SK-N-SH (cell line): ENCODE measurements at regions of chr1 and their contacts with region 1.

Region 1: DNA sequence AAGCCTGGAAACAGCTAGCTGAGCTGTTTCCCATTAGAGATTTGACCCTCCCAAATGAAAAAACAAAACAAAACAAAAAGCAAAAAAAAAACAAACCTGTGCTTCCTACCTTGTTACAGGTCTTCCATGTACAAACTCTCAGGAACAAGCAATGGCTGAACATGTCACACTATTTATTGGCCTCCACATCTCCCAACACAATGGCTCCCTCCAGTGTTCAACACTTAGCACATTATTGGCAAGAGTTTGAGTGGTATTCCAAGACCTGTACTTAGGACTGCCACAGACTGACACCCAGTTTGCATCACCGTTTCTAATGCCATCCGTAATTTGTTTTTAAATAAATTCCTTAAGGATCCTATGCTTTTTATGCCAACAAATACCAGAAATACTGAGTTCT is 195.0 kb upstream of the OLFM3 start:
- DNase-seq: peak; percentile 35
- H3K4me3 ChIP-seq: no peak overlapping the region; a peak in 1 of 4 replicates
- H3K27ac ChIP-seq: no peak overlapping the region
- H3K4me1 ChIP-seq: peaks cover 0 to 7% of the 10 kb centered on the region in 2 experiments; a peak in 1 of 4 replicates
- H3K27me3 ChIP-seq: no peaks in the 10 kb centered on the region
- CTCF ChIP-seq: peak; percentile 55
- EP300 ChIP-seq: no peak
- RAD21 ChIP-seq: peak; percentile 97

Region 2: DNA sequence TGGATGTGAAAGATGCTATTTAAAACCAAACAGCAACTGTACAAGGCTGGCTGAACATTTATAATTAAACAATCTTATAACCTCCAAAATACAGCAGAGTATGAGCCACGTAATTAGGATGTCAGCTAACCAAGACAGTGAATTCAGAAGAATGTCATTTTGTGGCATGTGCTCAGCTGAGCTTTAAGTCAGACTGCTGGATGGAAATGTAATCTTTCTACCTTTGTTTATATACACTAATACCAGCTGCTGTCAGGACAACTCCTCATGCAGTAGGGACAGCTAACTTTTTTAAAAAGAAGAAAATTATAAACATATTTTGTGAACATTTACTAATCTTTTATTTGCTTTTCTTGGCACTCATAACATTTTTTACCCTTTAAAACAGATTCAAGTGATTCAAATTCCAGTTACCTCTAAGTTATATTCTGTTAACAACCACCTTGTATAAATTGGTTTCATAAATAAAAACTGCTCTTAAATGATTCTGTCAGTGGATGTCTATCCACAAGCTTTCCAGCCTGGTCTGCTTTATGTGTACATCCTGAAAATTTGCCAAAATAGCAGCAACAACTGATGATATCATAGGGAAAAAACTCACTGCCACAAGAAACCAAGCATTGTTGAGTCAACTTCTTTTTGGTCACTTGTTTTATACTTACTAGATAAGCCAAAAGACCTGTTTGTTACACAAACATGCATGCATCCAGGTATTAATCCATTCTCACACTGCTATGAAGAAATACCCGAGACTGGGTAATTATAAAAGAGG is 1202.2 kb before region 1 on chr1:
- CTCF ChIA-PET with region 1: no interaction called
- POLR2A ChIA-PET with region 1: no interaction called
- DNase-seq: no peak
- H3K4me3 ChIP-seq: no peak overlapping the region
- H3K27ac ChIP-seq: peak overlapping the region; percentile 57 to 64; a peak in 3 of 4 replicates
- H3K4me1 ChIP-seq: peaks cover 0 to 10% of the 10 kb centered on the region in 2 experiments; a peak in 3 of 4 replicates
- H3K27me3 ChIP-seq: no peaks in the 10 kb centered on the region
- CTCF ChIP-seq: no peak
- EP300 ChIP-seq: peak; percentile 16 to 55; a peak in 1 of 4 replicates
- RAD21 ChIP-seq: no peak

Region 3: GRCh38 chr1:101474039-101474665 is 717.6 kb before region 1 on chr1:
- CTCF ChIA-PET with region 1: interaction called, 10 read pairs
- POLR2A ChIA-PET with region 1: no interaction called
- DNase-seq: peak; percentile 8
- H3K4me3 ChIP-seq: no peak overlapping the region
- H3K27ac ChIP-seq: no peak overlapping the region
- H3K4me1 ChIP-seq: no peaks in the 10 kb centered on the region
- H3K27me3 ChIP-seq: no peaks in the 10 kb centered on the region
- CTCF ChIP-seq: peak; percentile 57
- EP300 ChIP-seq: no peak
- RAD21 ChIP-seq: peak; percentile 70

Region 4: DNA sequence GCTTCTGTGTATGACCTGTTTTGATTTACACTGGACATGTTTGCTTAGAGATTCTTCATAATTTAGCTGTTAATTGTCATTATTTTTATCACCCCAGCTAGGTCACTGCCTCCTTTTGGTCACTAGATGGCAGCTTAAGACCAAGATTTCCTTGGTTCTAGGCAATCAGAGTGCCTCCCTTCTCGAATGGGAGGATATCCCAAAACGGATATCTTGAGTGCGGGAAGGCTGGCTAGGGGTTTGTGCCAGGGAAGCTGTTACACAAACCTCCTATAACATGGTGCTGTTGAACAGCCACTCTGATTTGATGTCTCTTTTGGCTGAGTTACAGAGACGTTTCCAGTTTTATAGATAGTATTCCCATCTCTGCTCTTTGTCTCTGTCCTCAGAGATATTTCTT is 671.4 kb before region 1 on chr1:
- CTCF ChIA-PET with region 1: interaction called, 28 read pairs
- POLR2A ChIA-PET with region 1: no interaction called
- DNase-seq: peak; percentile 42
- H3K4me3 ChIP-seq: peak overlapping the region in 1 of 2 experiments; percentile 38; a peak in 1 of 4 replicates
- H3K27ac ChIP-seq: no peak overlapping the region
- H3K4me1 ChIP-seq: no peaks in the 10 kb centered on the region
- H3K27me3 ChIP-seq: no peaks in the 10 kb centered on the region
- CTCF ChIP-seq: peak; percentile 86
- EP300 ChIP-seq: no peak
- RAD21 ChIP-seq: peak; percentile 84

Region 5: DNA sequence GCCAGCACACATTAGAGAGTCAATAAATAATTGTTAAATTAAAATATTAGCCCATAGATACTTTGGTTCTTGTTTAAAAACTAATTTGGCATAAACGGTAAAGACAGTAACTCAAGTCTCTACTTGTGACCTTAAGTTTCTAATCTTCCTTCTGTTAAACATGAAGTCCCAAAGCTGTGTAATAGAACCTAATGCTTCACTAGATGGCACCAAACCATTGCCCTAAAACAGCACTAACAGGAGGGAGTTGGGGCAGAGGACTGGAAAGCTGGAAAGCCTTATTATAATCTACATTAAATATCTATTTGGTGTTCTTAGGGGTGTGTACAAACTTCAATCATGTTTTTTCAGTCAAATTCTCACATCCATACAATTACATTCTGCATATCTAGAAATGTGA is 371.7 kb before region 1 on chr1:
- CTCF ChIA-PET with region 1: interaction called, 14 read pairs
- POLR2A ChIA-PET with region 1: no interaction called
- DNase-seq: peak; percentile 15
- H3K4me3 ChIP-seq: no peak overlapping the region
- H3K27ac ChIP-seq: no peak overlapping the region
- H3K4me1 ChIP-seq: no peaks in the 10 kb centered on the region; a peak in 2 of 4 replicates
- H3K27me3 ChIP-seq: no peaks in the 10 kb centered on the region
- CTCF ChIP-seq: peak; percentile 59
- EP300 ChIP-seq: no peak
- RAD21 ChIP-seq: peak; percentile 90

Region 6: GRCh38 chr1:101996825-101997465 is 194.8 kb before region 1 on chr1 and contains the start of gene OLFM3:
- CTCF ChIA-PET with region 1: interaction called, 29 read pairs
- POLR2A ChIA-PET with region 1: no interaction called
- DNase-seq: peak; percentile 73
- H3K4me3 ChIP-seq: peak within 1 kb of the TSS in 1 of 2 experiments; percentile 47; a peak in 2 of 4 replicates
- H3K27ac ChIP-seq: peak within 1 kb of the TSS in 1 of 2 experiments; percentile 39; a peak in 1 of 4 replicates
- H3K4me1 ChIP-seq: no peaks in the 10 kb centered on the region; a peak in 2 of 4 replicates
- H3K27me3 ChIP-seq: peaks cover 7% of the 10 kb centered on the region; the same call in 1 of the 2 replicates
- CTCF ChIP-seq: no peak
- EP300 ChIP-seq: no peak
- RAD21 ChIP-seq: peak; percentile 19; the same call in 1 of the 2 replicates
- polyA plus RNA-seq, gene OLFM3: 0.03 TPM in 1 of 2 replicates, not detected in the other

Region 7: DNA sequence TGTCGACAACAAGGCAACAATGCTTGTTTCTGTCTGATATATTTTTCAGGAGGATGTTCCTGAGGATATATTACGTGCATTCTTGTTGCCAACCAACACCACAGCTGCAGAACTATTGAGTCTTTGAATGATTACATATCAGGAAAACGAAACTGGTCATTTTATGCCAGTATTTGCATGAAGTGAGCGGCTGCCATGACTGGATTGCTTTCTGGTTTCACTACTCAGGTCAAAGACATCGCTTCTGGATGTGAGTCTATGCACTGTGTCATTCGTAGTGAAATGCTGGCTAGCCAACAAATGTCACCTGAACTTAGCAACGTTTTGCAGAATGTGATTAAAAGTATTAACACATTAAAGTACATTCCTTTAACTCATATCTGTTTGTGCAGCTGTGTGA is 159.2 kb before region 1 on chr1:
- CTCF ChIA-PET with region 1: no interaction called
- POLR2A ChIA-PET with region 1: no interaction called
- DNase-seq: no peak
- H3K4me3 ChIP-seq: no peak overlapping the region
- H3K27ac ChIP-seq: no peak overlapping the region
- H3K4me1 ChIP-seq: no peaks in the 10 kb centered on the region
- H3K27me3 ChIP-seq: no peaks in the 10 kb centered on the region
- CTCF ChIP-seq: no peak
- EP300 ChIP-seq: no peak
- RAD21 ChIP-seq: no peak

Region 8: GRCh38 chr1:102970498-102971078 is 778.9 kb after region 1 on chr1:
- CTCF ChIA-PET with region 1: interaction called, 12 read pairs
- POLR2A ChIA-PET with region 1: no interaction called
- DNase-seq: peak; percentile 45
- H3K4me3 ChIP-seq: peak overlapping the region in 1 of 2 experiments; percentile 35; a peak in 1 of 4 replicates
- H3K27ac ChIP-seq: no peak overlapping the region
- H3K4me1 ChIP-seq: no peaks in the 10 kb centered on the region
- H3K27me3 ChIP-seq: no peaks in the 10 kb centered on the region
- CTCF ChIP-seq: peak; percentile 88
- EP300 ChIP-seq: no peak
- RAD21 ChIP-seq: peak; percentile 83